ENCODE measurements at regions of chr12 and their contacts with region 1.

Region 1: DNA sequence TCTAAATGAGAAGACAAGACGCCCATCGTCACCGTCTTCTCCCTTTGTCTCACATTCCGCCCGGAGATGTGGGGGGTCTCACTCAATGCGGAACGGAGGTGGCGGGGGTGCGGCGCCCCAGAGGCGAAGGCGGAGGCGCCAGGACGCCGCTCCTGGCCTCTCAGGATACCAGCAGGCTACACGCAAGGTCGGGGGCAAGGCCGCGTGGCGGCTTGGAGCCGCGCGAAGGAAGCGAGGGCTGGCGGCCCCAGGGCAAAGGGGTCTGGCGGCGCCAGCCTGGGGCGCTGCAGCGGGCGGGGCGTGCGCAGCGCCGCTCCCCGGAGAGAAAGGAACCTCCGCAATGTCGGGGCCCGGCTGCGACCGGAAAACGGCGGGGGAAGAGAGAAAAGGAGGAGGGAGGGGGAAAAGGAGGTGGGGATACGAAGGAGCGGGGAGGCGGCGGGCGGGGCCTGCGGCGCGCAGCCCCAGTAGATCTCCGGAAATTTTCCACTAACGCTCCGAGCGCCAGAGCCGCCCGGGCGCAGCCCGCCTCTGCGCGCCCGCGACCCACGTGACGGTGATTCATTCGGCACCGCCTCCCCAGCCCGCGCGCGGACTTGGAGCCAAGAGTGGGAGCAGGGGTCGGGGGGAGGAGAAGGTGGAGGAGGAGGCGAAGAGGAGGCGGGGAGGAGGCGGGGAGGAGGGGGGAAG is 10.5 kb upstream of the SLC38A2 start:
- DNase-seq: peak; percentile 88 to 95 (median 90)
- H3K4me3 ChIP-seq: peak overlapping the region; percentile 26 to 78
- H3K4me3 Mint-ChIP-seq: peak overlapping the region; percentile 82 to 94 (median 90)
- H3K27ac ChIP-seq: peak overlapping the region; percentile 83
- H3K27ac Mint-ChIP-seq: peak overlapping the region; percentile 87 to 98 (median 97)
- H3K4me1 ChIP-seq: peaks cover 19% of the 10 kb centered on the region
- H3K4me1 Mint-ChIP-seq: peaks cover 19 to 31% (median 25%) of the 10 kb centered on the region in 4 donors
- H3K27me3 ChIP-seq: no peaks in the 10 kb centered on the region
- H3K27me3 Mint-ChIP-seq: no peaks in the 10 kb centered on the region

Region 2: DNA sequence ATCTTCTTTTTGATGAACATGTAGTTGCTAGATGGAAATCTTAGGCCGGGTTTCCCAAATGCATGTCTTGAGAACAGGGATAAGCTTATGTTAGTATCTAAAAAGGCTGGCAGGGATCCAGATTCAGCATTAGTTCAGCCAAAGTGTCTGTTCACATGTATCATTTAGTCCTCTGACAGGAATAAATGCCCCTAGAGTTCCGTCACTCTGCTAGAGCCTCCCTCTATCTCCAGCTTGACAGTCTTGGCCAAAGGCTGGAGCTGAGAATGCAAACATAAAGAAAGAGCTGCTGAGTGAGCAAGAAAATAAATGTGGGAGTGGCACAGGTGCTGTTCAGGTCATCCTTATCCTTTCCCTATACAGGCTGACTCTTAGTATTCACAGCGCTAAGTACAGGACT is 1493.2 kb before region 1 on chr12:
- CTCF ChIA-PET with region 1: no interaction called
- POLR2A ChIA-PET with region 1: no interaction called
- intact Hi-C with region 1: no loop called
- DNase-seq: no peak
- H3K4me3 ChIP-seq: no peak overlapping the region
- H3K4me3 Mint-ChIP-seq: no peak overlapping the region
- H3K27ac ChIP-seq: no peak overlapping the region
- H3K27ac Mint-ChIP-seq: no peak overlapping the region
- H3K4me1 ChIP-seq: no peaks in the 10 kb centered on the region
- H3K4me1 Mint-ChIP-seq: no peaks in the 10 kb centered on the region
- H3K27me3 ChIP-seq: no peaks in the 10 kb centered on the region
- H3K27me3 Mint-ChIP-seq: peaks cover 2 to 3% of the 10 kb centered on the region in 2 donors

Region 3: GRCh38 chr12:46364777-46365580 is 18.1 kb before region 1 on chr12:
- CTCF ChIA-PET with region 1: interaction called, 8 read pairs
- POLR2A ChIA-PET with region 1: interaction called, 114 read pairs
- intact Hi-C with region 1: no loop called
- DNase-seq: no peak
- H3K4me3 ChIP-seq: no peak overlapping the region
- H3K4me3 Mint-ChIP-seq: peak overlapping the region in 4 of 8 donors; percentile 3 to 31 (median 7)
- H3K27ac ChIP-seq: no peak overlapping the region
- H3K27ac Mint-ChIP-seq: peak overlapping the region; percentile 57 to 75 (median 68)
- H3K4me1 ChIP-seq: peaks cover 72% of the 10 kb centered on the region
- H3K4me1 Mint-ChIP-seq: peaks cover 37 to 85% (median 69%) of the 10 kb centered on the region in 4 donors
- H3K27me3 ChIP-seq: no peaks in the 10 kb centered on the region
- H3K27me3 Mint-ChIP-seq: no peaks in the 10 kb centered on the region